CD8-positive, alpha-beta T cell (primary cell): ENCODE measurements at regions of chr19 and their contacts with region 1.

Region 1: DNA sequence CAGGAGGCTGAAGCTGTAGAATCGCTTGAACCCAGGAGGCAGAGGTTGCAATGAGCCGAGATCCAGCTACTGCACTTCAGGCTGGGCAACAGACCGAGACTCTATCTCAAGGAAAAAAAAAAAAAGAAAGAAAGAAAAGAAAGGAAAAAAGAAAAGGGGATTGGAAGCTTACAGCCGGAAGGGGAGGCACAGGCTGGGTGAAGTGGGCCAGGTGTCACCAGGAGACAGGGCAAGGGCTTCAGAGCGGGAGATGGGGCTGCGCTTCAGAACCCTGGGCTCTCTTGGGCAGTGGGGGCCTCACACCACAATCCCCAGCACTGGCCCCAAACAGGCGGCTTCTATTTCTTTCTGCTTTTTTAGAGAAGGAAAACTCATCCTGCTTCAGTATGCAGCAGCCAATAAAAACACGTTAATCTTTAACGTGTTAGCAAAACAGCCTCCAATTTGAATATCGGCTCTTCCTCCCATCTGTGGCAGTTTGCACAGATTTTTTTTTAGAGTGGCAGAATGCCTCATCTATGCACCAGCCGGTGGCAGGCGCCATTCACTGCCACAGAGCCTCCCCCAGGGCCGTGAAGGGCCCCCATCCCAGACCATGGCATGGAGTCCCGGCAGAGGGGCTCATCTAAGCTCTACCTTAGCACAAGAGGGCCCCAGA is 46.6 kb upstream of the C19orf12 start:
- DNase-seq: no peak
- ATAC-seq: no peak
- H3K4me3 ChIP-seq: no peak overlapping the region
- H3K4me3 Mint-ChIP-seq: no peak overlapping the region
- H3K27ac ChIP-seq: no peak overlapping the region
- H3K27ac Mint-ChIP-seq: no peak overlapping the region
- H3K4me1 ChIP-seq: no peaks in the 10 kb centered on the region
- H3K4me1 Mint-ChIP-seq: peaks cover 2% of the 10 kb centered on the region
- H3K27me3 ChIP-seq: no peaks in the 10 kb centered on the region
- H3K27me3 Mint-ChIP-seq: peaks cover 1% of the 10 kb centered on the region
- CTCF ChIP-seq: no peak

Region 2: DNA sequence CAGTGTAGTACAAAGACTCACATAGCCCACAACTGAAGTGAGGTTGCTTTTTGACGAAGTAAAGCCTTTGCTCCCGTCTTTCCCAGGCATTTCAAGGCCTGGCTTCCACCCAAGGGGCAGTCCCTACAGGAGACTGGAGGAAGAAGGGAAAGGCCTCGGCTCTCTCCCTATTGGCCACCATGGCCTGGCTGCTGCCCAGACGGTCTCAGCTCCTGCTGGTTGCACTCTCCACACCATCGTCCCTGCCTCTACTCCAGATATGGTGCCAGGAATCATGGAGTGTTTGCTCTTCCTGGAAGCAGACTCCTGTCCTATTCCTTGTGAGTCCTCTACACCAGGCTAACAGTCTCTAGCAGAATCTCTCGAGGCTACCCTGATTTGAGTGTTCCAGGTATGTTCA is 424.7 kb before region 1 on chr19:
- CTCF ChIA-PET with region 1: no interaction called
- POLR2A ChIA-PET with region 1: no interaction called
- intact Hi-C with region 1: no loop called
- DNase-seq: no peak
- ATAC-seq: no peak
- H3K4me3 ChIP-seq: no peak overlapping the region
- H3K4me3 Mint-ChIP-seq: no peak overlapping the region
- H3K27ac ChIP-seq: no peak overlapping the region
- H3K27ac Mint-ChIP-seq: no peak overlapping the region
- H3K4me1 ChIP-seq: no peaks in the 10 kb centered on the region
- H3K4me1 Mint-ChIP-seq: no peaks in the 10 kb centered on the region
- H3K27me3 ChIP-seq: no peaks in the 10 kb centered on the region
- H3K27me3 Mint-ChIP-seq: peaks cover 11% of the 10 kb centered on the region
- CTCF ChIP-seq: no peak

Region 3: GRCh38 chr19:29680447-29680846 is 81.3 kb before region 1 on chr19:
- CTCF ChIA-PET with region 1: no interaction called
- POLR2A ChIA-PET with region 1: no interaction called
- intact Hi-C with region 1: no loop called
- DNase-seq: peak; percentile 67 to 94 (median 85)
- ATAC-seq: peak; percentile 83
- H3K4me3 ChIP-seq: peak overlapping the region; percentile 13 to 44
- H3K4me3 Mint-ChIP-seq: peak overlapping the region; percentile 71
- H3K27ac ChIP-seq: peak overlapping the region; percentile 26 to 71
- H3K27ac Mint-ChIP-seq: peak overlapping the region; percentile 86
- H3K4me1 ChIP-seq: peaks cover 74% of the 10 kb centered on the region
- H3K4me1 Mint-ChIP-seq: peaks cover 76% of the 10 kb centered on the region
- H3K27me3 ChIP-seq: no peaks in the 10 kb centered on the region
- H3K27me3 Mint-ChIP-seq: no peaks in the 10 kb centered on the region
- CTCF ChIP-seq: no peak

Region 4: GRCh38 chr19:29745253-29745652 is 16.5 kb before region 1 on chr19:
- CTCF ChIA-PET with region 1: interaction called, 15 read pairs
- POLR2A ChIA-PET with region 1: no interaction called
- intact Hi-C with region 1: no loop called
- DNase-seq: no peak
- ATAC-seq: no peak
- H3K4me3 ChIP-seq: no peak overlapping the region
- H3K4me3 Mint-ChIP-seq: no peak overlapping the region
- H3K27ac ChIP-seq: no peak overlapping the region
- H3K27ac Mint-ChIP-seq: no peak overlapping the region
- H3K4me1 ChIP-seq: no peaks in the 10 kb centered on the region
- H3K4me1 Mint-ChIP-seq: no peaks in the 10 kb centered on the region
- H3K27me3 ChIP-seq: no peaks in the 10 kb centered on the region
- H3K27me3 Mint-ChIP-seq: no peaks in the 10 kb centered on the region
- CTCF ChIP-seq: no peak

Region 5: DNA sequence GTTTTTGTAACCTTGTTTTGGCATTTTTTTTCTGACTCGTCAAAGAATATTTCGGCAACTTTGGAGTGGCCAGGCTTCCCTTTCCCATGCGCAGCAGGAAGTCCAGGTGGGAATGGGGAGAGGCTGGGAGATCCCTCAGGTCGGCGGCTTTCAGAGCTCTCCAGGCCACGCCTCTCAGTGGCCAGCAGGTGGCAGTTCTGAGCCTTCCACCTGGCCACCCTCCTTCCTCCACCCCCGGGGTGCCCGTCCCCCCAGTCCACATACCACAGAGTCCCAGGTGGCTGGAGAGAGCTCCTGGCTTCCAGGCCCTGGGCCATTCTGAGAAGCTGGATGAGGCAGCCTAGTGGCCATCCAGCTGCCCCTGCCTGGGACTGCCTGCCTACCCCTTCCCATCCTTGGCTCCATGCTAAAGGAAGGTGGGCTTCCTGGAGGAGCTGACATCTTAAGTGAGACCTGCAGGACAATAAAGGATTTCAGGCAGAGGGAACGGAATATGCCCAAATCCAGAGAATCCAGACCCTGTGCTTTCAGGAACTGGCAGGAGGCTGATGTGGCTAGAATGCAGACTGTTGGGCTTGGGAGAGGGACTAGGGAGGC is 96.4 kb after region 1 on chr19:
- CTCF ChIA-PET with region 1: interaction called, 19 read pairs
- POLR2A ChIA-PET with region 1: no interaction called
- intact Hi-C with region 1: no loop called
- DNase-seq: peak in 6 of 9 experiments; percentile 33 to 65 (median 50)
- ATAC-seq: peak; percentile 86
- H3K4me3 ChIP-seq: no peak overlapping the region
- H3K4me3 Mint-ChIP-seq: no peak overlapping the region
- H3K27ac ChIP-seq: no peak overlapping the region
- H3K27ac Mint-ChIP-seq: no peak overlapping the region
- H3K4me1 ChIP-seq: peaks cover 5% of the 10 kb centered on the region
- H3K4me1 Mint-ChIP-seq: peaks cover 2% of the 10 kb centered on the region
- H3K27me3 ChIP-seq: peaks cover 0 to 1% of the 10 kb centered on the region in 2 experiments
- H3K27me3 Mint-ChIP-seq: peaks cover 14% of the 10 kb centered on the region
- CTCF ChIP-seq: peak; percentile 67

Region 6: GRCh38 chr19:29873024-29873800 is 111.5 kb after region 1 on chr19:
- CTCF ChIA-PET with region 1: interaction called, 145 read pairs
- POLR2A ChIA-PET with region 1: interaction called, 3 read pairs
- intact Hi-C with region 1: loop called (anchors 1 kb)
- DNase-seq: peak; percentile 39 to 84 (median 67)
- ATAC-seq: peak; percentile 78
- H3K4me3 ChIP-seq: peak overlapping the region; percentile 18 to 63
- H3K4me3 Mint-ChIP-seq: peak overlapping the region; percentile 78
- H3K27ac ChIP-seq: no peak overlapping the region
- H3K27ac Mint-ChIP-seq: no peak overlapping the region
- H3K4me1 ChIP-seq: peaks cover 4% of the 10 kb centered on the region
- H3K4me1 Mint-ChIP-seq: peaks cover 8% of the 10 kb centered on the region
- H3K27me3 ChIP-seq: peaks cover 0 to 9% of the 10 kb centered on the region in 2 experiments
- H3K27me3 Mint-ChIP-seq: peaks cover 23% of the 10 kb centered on the region
- CTCF ChIP-seq: peak; percentile 94